ENCODE measurements at regions of chr17 and their contacts with region 1.

Region 1: DNA sequence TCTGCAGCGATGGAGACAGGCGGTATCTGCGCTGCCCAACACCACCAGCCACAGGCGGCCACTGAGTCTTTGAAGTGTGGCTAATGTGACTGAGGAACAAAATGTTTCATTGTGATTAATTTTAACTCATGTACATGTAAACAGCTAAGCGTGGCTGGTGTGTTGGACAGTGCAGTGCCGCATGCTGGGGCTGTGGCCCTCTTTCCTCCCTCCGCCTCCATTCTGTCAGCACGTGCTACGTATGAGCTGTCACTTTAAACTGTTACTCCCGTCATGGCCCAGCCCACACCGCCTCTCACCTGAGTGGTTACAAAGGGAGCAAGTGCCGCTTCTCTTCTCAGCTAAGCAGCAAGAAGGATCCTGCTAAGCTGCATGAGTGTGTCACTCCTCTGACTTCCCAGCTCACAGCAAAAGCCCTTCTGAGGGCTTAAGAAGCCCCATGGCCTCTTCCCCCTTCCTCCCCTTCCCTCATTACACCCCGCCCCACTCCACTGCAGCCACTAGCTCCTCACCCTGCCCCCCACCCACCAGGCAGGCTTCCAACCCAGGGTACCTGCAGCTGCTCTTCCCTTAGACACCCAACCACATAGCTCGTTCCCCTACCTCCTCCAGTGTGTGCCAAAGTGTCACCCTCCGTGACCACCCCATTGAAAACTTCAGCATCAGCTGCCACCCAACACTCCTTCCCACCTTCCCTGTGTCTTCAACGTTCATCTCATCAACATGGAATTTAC is 15.0 kb downstream of the HASPIN start:
- DNase-seq: peak; percentile 58
- H3K4me3 ChIP-seq: peak overlapping the region; percentile 2 to 11
- H3K27ac ChIP-seq: peak overlapping the region; percentile 44 to 59
- H3K4me1 ChIP-seq: no peaks in the 10 kb centered on the region
- H3K27me3 ChIP-seq: no peaks in the 10 kb centered on the region
- CTCF ChIP-seq: no peak
- POLR2A ChIP-seq: no peak

Region 2: GRCh38 chr17:3474212-3474611 is 264.5 kb before region 1 on chr17:
- intact Hi-C with region 1: no loop called
- DNase-seq: no peak
- H3K4me3 ChIP-seq: no peak overlapping the region
- H3K27ac ChIP-seq: no peak overlapping the region
- H3K4me1 ChIP-seq: no peaks in the 10 kb centered on the region
- H3K27me3 ChIP-seq: no peaks in the 10 kb centered on the region
- CTCF ChIP-seq: no peak
- POLR2A ChIP-seq: no peak

Region 3: GRCh38 chr17:3845621-3846441 is 107.1 kb after region 1 on chr17 and contains the start of gene NCBP3:
- intact Hi-C with region 1: loop called (anchors 5 kb)
- DNase-seq: peak; percentile 86
- H3K4me3 ChIP-seq: peak within 1 kb of the TSS; percentile 80 to 93
- H3K27ac ChIP-seq: peak within 1 kb of the TSS; percentile 83 to 84
- H3K4me1 ChIP-seq: peaks cover 5% of the 10 kb centered on the region
- H3K27me3 ChIP-seq: no peaks in the 10 kb centered on the region
- CTCF ChIP-seq: peak; percentile 83 to 98 (median 96)
- POLR2A ChIP-seq: peak; percentile 86
- total RNA-seq, gene NCBP3: 14.8 to 370 TPM

Measured in prostate gland (tissue), 2 donors.